Activated T-helper 1 cell treated with anti-CD3 and anti-CD28 coated beads, Interleukin-12 subunit alpha, Interleukin-12 subunit beta, Interleukin-2, Interleukin-4 antibody, amounts not matched to agents 30 ng/mL and 10 ng/mL and 1 ng/mL, durations not matched to agents 14 hours and 24 hours and 36 hours (primary cell): ENCODE measurements at regions of chr6 and their contacts with region 1.

Region 1: DNA sequence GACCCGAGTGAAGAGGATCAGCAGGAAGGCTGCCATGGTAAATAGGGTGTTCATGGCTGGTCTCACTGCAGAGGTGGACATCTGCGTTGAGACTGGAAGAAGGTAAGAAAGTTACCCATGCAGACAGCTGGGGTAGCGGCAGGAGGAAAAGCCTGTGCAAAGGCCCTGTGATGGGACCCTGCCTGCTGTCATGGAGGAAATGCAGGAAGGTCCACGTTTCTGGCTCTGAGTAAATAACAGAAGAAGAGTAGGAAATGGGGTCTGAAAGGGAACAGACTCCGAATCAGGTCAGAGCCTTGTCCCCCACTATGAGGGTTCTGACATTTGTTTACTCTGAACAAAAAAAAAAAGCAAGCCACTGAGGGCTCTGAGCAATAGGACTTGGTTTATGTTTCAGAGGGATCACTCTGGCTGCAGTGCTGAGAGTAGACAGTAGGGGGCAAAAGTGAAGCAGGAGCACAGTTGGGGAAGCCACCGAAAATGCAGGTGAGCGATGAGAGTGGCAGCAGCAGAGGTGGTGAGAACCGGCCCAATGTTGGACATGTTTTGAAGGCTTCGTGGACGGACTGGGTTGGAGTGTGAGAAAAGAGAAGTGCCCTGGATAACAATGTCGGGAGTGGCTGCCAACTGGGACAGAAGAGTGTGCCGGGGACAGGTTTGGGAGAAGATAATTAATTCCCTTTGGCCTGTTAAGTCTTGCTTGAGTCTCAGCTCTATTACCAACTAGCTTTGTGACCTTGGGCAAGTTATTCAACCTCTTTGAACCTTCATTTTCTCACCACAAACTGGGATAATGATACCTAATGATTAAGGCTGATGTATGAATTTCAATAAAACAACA is 57.9 kb upstream of the MAP7 start:
- DNase-seq: peak; percentile 71
- H3K4me3 Mint-ChIP-seq: no peak overlapping the region
- H3K27ac Mint-ChIP-seq: peak overlapping the region; percentile 30
- H3K4me1 Mint-ChIP-seq: peaks cover 28% of the 10 kb centered on the region
- H3K27me3 Mint-ChIP-seq: no peaks in the 10 kb centered on the region

Region 2: GRCh38 chr6:136582711-136583471 is 25.3 kb before region 1 on chr6:
- intact Hi-C with region 1: loop called (anchors 1 kb)
- DNase-seq: no peak
- H3K4me3 Mint-ChIP-seq: no peak overlapping the region
- H3K27ac Mint-ChIP-seq: no peak overlapping the region
- H3K4me1 Mint-ChIP-seq: peaks cover 6% of the 10 kb centered on the region
- H3K27me3 Mint-ChIP-seq: no peaks in the 10 kb centered on the region

Region 3: GRCh38 chr6:136593748-136594490 is 14.2 kb before region 1 on chr6:
- intact Hi-C with region 1: loop called (anchors 1 kb)
- DNase-seq: peak; percentile 56
- H3K4me3 Mint-ChIP-seq: peak overlapping the region; percentile 75
- H3K27ac Mint-ChIP-seq: peak overlapping the region; percentile 96
- H3K4me1 Mint-ChIP-seq: peaks cover 54% of the 10 kb centered on the region
- H3K27me3 Mint-ChIP-seq: no peaks in the 10 kb centered on the region

Region 4: GRCh38 chr6:136643850-136644596 is 35.9 kb after region 1 on chr6:
- intact Hi-C with region 1: loop called (anchors 1 kb)
- DNase-seq: peak; percentile 62
- H3K4me3 Mint-ChIP-seq: no peak overlapping the region
- H3K27ac Mint-ChIP-seq: no peak overlapping the region
- H3K4me1 Mint-ChIP-seq: peaks cover 5% of the 10 kb centered on the region
- H3K27me3 Mint-ChIP-seq: no peaks in the 10 kb centered on the region

Region 5: DNA sequence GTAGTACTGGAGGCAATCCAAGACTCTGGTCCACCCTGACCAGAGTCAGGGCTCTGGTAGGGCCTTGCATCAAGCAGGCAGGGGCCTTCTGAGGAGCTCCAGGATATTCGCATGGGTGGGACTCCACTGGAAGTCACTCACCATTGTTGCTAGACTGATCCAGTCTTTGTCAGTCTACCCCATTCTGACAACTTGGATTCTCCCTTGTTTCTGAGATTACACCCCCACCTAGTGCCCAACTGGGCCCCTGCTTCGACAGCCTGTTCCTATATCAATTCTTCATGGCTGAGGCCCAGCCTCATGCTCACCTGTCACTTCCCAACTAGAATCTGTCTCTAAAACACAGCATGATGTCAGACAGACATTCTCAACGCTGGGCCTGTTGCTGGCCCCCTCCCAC is 319.1 kb after region 1 on chr6:
- intact Hi-C with region 1: loop called (anchors 10 kb)
- DNase-seq: no peak
- H3K4me3 Mint-ChIP-seq: no peak overlapping the region
- H3K27ac Mint-ChIP-seq: no peak overlapping the region
- H3K4me1 Mint-ChIP-seq: no peaks in the 10 kb centered on the region
- H3K27me3 Mint-ChIP-seq: peaks cover 42% of the 10 kb centered on the region